ENCODE measurements at regions of chr7 and their contacts with region 1.

Region 1: GRCh38 chr7:794671-795329 is 37.5 kb upstream of the SUN1 start:
- DNase-seq: no peak
- H3K4me3 ChIP-seq: no peak overlapping the region
- H3K27ac ChIP-seq: no peak overlapping the region
- H3K4me1 ChIP-seq: no peaks in the 10 kb centered on the region
- H3K27me3 ChIP-seq: no peaks in the 10 kb centered on the region
- CTCF ChIP-seq: no peak
- POLR2A ChIP-seq: no peak

Region 2: GRCh38 chr7:831596-832166 is 36.9 kb after region 1 on chr7:
- CTCF ChIA-PET with region 1: interaction called, 21 read pairs
- POLR2A ChIA-PET with region 1: no interaction called
- dilution Hi-C with region 1: no loop called
- intact Hi-C with region 1: loop called (anchors 1 kb)
- DNase-seq: peak; percentile 93
- H3K4me3 ChIP-seq: peak overlapping the region in 2 of 3 experiments; percentile 12 to 49
- H3K27ac ChIP-seq: peak overlapping the region; percentile 98
- H3K4me1 ChIP-seq: peaks cover 22% of the 10 kb centered on the region
- H3K27me3 ChIP-seq: no peaks in the 10 kb centered on the region
- CTCF ChIP-seq: no peak
- POLR2A ChIP-seq: no peak